Heart left ventricle (tissue), 16 donors: ENCODE measurements at regions of chr14 and their contacts with region 1.

Region 1: DNA sequence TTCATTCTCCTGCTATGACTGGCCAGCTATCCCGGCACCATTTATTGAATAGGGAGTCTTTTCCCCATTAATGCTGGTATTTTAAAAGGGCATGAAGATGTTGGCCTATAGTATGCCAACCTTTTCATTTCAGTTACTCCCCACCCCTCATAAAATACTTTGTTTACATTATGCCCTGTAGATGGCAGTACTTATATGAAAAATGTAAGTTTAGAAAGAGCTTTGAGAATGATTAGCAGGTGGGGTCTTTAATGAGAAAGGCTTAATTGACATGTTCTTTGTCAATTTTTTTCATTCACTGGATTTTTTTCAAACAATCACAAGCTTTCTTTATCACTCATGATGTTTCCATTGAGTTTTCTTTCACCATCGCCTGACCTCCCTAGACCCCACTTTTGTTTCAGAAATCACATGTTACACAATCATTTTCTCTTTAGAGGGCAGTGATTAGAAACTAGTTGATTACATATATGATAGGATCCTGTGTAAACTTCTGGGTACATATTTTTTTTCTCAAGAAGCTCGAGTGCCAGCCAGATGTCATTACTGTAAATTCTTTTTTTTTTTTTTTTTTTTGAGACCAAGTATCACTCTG is 62.6 kb upstream of the PSMA6 start:
- DNase-seq: no peak
- ATAC-seq: no peak
- H3K4me3 ChIP-seq: no peak overlapping the region
- H3K27ac ChIP-seq: no peak overlapping the region
- H3K4me1 ChIP-seq: peaks cover 0 to 33% (median 0%) of the 10 kb centered on the region in 12 donors
- H3K27me3 ChIP-seq: no peaks in the 10 kb centered on the region
- CTCF ChIP-seq: peak in 11 of 12 donors; percentile 9 to 49 (median 30)
- POLR2A ChIP-seq: no peak

Region 2: GRCh38 chr14:33972583-33973081 is 1257.0 kb before region 1 on chr14:
- intact Hi-C with region 1: no loop called
- DNase-seq: no peak
- ATAC-seq: no peak
- H3K4me3 ChIP-seq: no peak overlapping the region
- H3K27ac ChIP-seq: no peak overlapping the region
- H3K4me1 ChIP-seq: no peaks in the 10 kb centered on the region
- H3K27me3 ChIP-seq: no peaks in the 10 kb centered on the region
- CTCF ChIP-seq: no peak
- POLR2A ChIP-seq: no peak

Region 3: DNA sequence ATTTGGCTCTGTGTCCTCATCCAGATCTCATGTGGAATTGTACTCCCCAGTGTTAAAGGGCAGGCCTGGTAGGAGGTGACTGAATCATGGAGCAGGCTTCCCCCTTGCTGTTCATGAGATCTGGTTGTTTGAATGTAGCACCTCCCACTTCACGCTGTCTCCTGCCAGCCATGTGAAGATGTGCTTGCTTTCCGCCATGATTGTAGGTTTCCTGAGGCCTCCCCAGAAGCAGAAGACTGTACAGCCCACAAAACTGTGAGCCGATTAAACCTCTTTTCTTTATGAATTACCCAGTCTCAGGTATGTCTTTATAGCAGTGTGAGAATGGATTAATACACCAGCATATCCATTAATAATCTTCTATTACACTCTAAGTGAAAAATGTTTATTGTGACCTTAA is 424.7 kb before region 1 on chr14:
- intact Hi-C with region 1: no loop called
- DNase-seq: no peak
- ATAC-seq: no peak
- H3K4me3 ChIP-seq: no peak overlapping the region
- H3K27ac ChIP-seq: no peak overlapping the region
- H3K4me1 ChIP-seq: no peaks in the 10 kb centered on the region
- H3K27me3 ChIP-seq: no peaks in the 10 kb centered on the region
- CTCF ChIP-seq: no peak
- POLR2A ChIP-seq: no peak

Region 4: DNA sequence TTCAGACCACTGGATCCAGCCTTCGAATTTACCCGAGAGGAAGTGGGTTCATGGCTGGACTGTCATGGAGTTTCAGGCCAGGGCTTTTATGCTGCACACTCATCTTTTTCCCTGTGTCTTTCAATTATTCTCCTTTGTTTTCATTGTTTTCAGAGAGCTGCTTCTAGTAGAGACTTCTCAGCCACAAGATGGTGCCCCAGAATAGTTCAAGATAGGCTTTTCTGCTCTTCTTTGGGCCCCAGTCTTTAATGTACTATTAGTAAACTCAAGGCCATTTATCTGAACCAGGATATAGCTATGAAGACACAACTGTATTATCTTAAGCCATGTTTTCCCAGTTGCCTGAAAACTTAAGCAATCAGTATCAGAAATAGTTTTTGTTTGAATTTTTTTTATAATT is 32.2 kb after region 1 on chr14:
- intact Hi-C with region 1: no loop called
- DNase-seq: no peak
- ATAC-seq: peak in 1 of 4 donors; percentile 54
- H3K4me3 ChIP-seq: no peak overlapping the region
- H3K27ac ChIP-seq: no peak overlapping the region
- H3K4me1 ChIP-seq: peaks cover 0 to 16% (median 7%) of the 10 kb centered on the region in 12 donors
- H3K27me3 ChIP-seq: no peaks in the 10 kb centered on the region
- CTCF ChIP-seq: peak in 9 of 12 donors; percentile 11 to 54 (median 36)
- POLR2A ChIP-seq: no peak

Region 5: DNA sequence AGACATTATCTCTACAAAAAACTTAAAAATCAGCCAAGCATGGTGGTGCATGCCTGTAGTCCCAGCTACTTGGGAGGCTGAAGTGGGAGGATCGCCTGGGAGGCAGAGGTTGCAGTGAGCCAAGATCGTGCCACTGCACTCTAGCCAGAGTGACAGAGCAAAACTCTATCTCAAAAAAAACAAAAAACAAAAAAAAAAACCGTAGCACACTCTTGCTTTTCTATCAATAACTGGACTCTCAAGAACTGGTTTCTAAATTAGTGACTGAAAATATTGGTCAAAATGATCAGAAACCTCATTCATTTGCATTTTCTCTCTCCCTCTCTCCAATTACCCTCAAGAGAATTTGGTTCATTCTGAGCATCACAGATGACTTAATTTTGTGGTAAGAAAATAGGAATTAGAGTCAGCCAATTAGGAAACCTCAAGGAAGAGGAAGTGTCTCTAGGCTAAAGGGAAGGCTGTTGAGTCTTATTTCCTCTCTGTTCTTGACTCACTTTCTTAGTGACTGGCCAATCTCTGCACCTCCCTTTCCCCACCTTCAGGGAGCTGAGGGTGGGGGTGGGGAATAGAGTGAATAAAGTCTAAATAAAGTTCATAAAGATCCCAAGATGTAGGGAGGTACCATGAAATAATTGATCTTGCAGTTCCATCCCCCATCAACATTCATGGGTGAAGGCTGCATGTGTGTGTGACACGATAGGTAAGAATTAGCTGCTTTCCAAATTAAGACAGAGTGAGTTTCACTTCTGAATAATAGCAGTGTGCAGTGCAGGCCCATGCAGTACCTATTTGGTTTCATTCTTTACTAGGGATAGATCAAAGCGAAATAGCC is 55.8 kb after region 1 on chr14:
- intact Hi-C with region 1: loop called in 3 of 10 experiments (anchors 2 to 10 kb)
- DNase-seq: no peak
- ATAC-seq: peak in 3 of 4 donors; percentile 71 to 80 (median 80)
- H3K4me3 ChIP-seq: peak overlapping the region in 1 of 12 donors; percentile 2
- H3K27ac ChIP-seq: peak overlapping the region in 5 of 12 donors; percentile 6 to 80 (median 25)
- H3K4me1 ChIP-seq: peaks cover 0 to 47% (median 6%) of the 10 kb centered on the region in 12 donors
- H3K27me3 ChIP-seq: no peaks in the 10 kb centered on the region
- CTCF ChIP-seq: no peak
- POLR2A ChIP-seq: no peak

Region 6: GRCh38 chr14:35669805-35670204 is 440.2 kb after region 1 on chr14:
- intact Hi-C with region 1: no loop called
- DNase-seq: no peak
- ATAC-seq: peak in 2 of 4 donors; percentile 50 to 65
- H3K4me3 ChIP-seq: no peak overlapping the region
- H3K27ac ChIP-seq: no peak overlapping the region
- H3K4me1 ChIP-seq: no peaks in the 10 kb centered on the region
- H3K27me3 ChIP-seq: no peaks in the 10 kb centered on the region
- CTCF ChIP-seq: no peak
- POLR2A ChIP-seq: no peak